Activated CD4-positive, alpha-beta T cell treated with anti-CD3 and anti-CD28 coated beads, Interleukin-2, amount 10 ng/mL, durations not matched to agents 7 days and 5 days (primary cell): ENCODE measurements at regions of chr7 and their contacts with region 1.

Region 1: DNA sequence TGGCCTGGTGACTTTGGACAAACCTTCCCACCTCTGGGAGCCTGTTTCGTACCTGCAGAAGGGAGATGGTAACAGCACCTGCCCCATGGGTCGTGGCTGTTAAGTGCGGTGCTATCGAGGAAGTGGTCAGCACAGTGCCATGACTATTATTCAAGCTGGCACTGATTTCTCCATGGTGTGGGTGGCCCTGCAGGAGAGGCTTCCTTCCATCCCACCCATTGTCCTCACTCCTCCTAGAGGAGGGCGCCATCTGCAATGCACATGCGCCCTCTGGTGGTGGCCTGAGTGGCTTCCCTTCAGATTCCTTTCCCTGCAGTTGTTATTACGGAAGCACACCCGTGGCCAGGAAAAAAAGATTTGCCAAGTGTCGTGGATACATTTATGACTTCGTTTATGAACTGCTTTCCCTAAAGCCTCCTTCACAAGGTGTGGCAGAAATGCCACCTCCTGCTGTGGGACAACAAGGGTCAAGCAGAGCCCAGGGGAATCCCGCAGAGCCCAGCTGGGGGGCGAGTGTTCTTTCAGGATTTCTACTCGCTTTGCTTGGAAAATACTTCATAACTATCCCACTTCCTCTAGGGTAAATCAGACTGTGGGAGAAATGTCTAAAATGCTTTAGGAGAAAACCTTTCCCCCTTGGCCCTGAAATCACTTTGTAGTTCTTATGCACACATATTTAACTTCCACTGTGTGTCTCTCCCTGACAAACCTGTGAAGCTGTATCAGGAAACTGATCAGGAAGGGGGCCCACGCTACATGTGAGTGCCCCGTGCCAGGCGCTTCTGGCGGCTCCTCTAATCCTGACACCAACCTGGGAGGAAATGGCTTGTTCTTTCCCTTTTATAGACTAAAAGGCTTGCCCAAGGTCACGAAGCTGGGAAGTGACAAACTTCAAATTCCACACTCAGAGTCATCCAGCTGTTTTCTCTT is 98.0 kb upstream of the ANLN start:
- DNase-seq: peak; percentile 72
- H3K4me3 Mint-ChIP-seq: peak overlapping the region; percentile 51
- H3K27ac Mint-ChIP-seq: peak overlapping the region; percentile 10
- H3K4me1 Mint-ChIP-seq: peaks cover 50% of the 10 kb centered on the region
- H3K27me3 Mint-ChIP-seq: no peaks in the 10 kb centered on the region

Region 2: GRCh38 chr7:35985126-35985754 is 306.4 kb before region 1 on chr7:
- CTCF ChIA-PET with region 1: interaction called, 11 read pairs
- POLR2A ChIA-PET with region 1: no interaction called
- DNase-seq: peak; percentile 77
- H3K4me3 Mint-ChIP-seq: no peak overlapping the region
- H3K27ac Mint-ChIP-seq: no peak overlapping the region
- H3K4me1 Mint-ChIP-seq: no peaks in the 10 kb centered on the region
- H3K27me3 Mint-ChIP-seq: no peaks in the 10 kb centered on the region